CD8-positive, alpha-beta memory T cell (primary cell): ENCODE measurements at regions of chr6 and their contacts with region 1.

Region 1: GRCh38 chr6:35583893-35584688 is 71.4 kb upstream of the TULP1 start:
- DNase-seq: peak; percentile 55 to 79 (median 64)
- H3K4me3 ChIP-seq: no peak overlapping the region
- H3K4me3 Mint-ChIP-seq: peak overlapping the region in 1 of 7 donors; percentile 7
- H3K27ac ChIP-seq: no peak overlapping the region
- H3K27ac Mint-ChIP-seq: peak overlapping the region; percentile 43 to 77 (median 68)
- H3K4me1 ChIP-seq: peaks cover 65% of the 10 kb centered on the region
- H3K4me1 Mint-ChIP-seq: peaks cover 36 to 58% (median 43%) of the 10 kb centered on the region in 3 donors
- H3K27me3 ChIP-seq: no peaks in the 10 kb centered on the region
- H3K27me3 Mint-ChIP-seq: no peaks in the 10 kb centered on the region

Region 2: GRCh38 chr6:35601331-35602132 is 17.4 kb after region 1 on chr6:
- CTCF ChIA-PET with region 1: interaction called, 52 read pairs
- POLR2A ChIA-PET with region 1: interaction called, 7 read pairs
- DNase-seq: peak; percentile 23 to 92 (median 83)
- H3K4me3 ChIP-seq: peak overlapping the region; percentile 58
- H3K4me3 Mint-ChIP-seq: peak overlapping the region; percentile 76 to 85 (median 81)
- H3K27ac ChIP-seq: peak overlapping the region; percentile 44
- H3K27ac Mint-ChIP-seq: peak overlapping the region; percentile 71 to 97 (median 86)
- H3K4me1 ChIP-seq: peaks cover 83% of the 10 kb centered on the region
- H3K4me1 Mint-ChIP-seq: peaks cover 69 to 92% (median 84%) of the 10 kb centered on the region in 3 donors
- H3K27me3 ChIP-seq: no peaks in the 10 kb centered on the region
- H3K27me3 Mint-ChIP-seq: no peaks in the 10 kb centered on the region

Region 3: GRCh38 chr6:35611240-35611639 is 27.1 kb after region 1 on chr6:
- CTCF ChIA-PET with region 1: interaction called, 10 read pairs
- POLR2A ChIA-PET with region 1: interaction called, 7 read pairs
- DNase-seq: peak in 3 of 5 donors; percentile 47 to 58 (median 54)
- H3K4me3 ChIP-seq: peak overlapping the region; percentile 26
- H3K4me3 Mint-ChIP-seq: peak overlapping the region; percentile 3 to 76 (median 69)
- H3K27ac ChIP-seq: no peak overlapping the region
- H3K27ac Mint-ChIP-seq: peak overlapping the region; percentile 75 to 97 (median 88)
- H3K4me1 ChIP-seq: peaks cover 36% of the 10 kb centered on the region
- H3K4me1 Mint-ChIP-seq: peaks cover 38 to 81% (median 70%) of the 10 kb centered on the region in 3 donors
- H3K27me3 ChIP-seq: no peaks in the 10 kb centered on the region
- H3K27me3 Mint-ChIP-seq: no peaks in the 10 kb centered on the region